Endothelial cell of umbilical vein (primary cell): ENCODE measurements at regions of chr9 and their contacts with region 1.

Region 1: DNA sequence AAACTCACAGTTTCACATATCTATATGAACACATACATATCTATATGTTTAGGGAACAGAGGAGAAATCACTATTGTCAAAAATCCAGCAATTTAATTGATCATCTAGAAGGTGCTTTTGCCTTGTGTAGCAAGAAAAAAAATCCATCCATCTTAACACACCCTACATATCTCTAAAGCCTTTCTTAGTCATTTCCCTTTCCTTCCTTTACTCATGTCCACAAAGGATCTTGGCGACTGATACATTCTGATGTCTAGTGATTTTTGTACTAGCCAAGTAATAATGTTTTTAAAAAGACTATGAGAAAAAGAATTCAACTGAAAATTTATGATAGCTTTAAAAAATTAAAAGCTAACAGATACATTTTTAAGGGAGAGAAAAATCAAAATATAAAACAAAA is 22.5 kb downstream of the ZDHHC21 start:
- DNase-seq: peak; percentile 82
- H3K4me3 ChIP-seq: peak overlapping the region in 1 of 3 experiments; percentile 40
- H3K27ac ChIP-seq: peak overlapping the region; percentile 93
- H3K4me1 ChIP-seq: peaks cover 27% of the 10 kb centered on the region
- H3K27me3 ChIP-seq: no peaks in the 10 kb centered on the region
- CTCF ChIP-seq: no peak
- POLR2A ChIP-seq: no peak

Region 2: GRCh38 chr9:14752271-14752670 is 81.6 kb after region 1 on chr9:
- CTCF ChIA-PET with region 1: no interaction called
- POLR2A ChIA-PET with region 1: no interaction called
- dilution Hi-C with region 1: no loop called
- intact Hi-C with region 1: loop called (anchors 5 kb)
- DNase-seq: peak; percentile 97
- H3K4me3 ChIP-seq: no peak overlapping the region
- H3K27ac ChIP-seq: peak overlapping the region; percentile 59
- H3K4me1 ChIP-seq: peaks cover 39% of the 10 kb centered on the region
- H3K27me3 ChIP-seq: no peaks in the 10 kb centered on the region
- CTCF ChIP-seq: no peak
- POLR2A ChIP-seq: peak; percentile 42